H1 (cell line): ENCODE measurements at regions of chr11 and their contacts with region 1.

Region 1: DNA sequence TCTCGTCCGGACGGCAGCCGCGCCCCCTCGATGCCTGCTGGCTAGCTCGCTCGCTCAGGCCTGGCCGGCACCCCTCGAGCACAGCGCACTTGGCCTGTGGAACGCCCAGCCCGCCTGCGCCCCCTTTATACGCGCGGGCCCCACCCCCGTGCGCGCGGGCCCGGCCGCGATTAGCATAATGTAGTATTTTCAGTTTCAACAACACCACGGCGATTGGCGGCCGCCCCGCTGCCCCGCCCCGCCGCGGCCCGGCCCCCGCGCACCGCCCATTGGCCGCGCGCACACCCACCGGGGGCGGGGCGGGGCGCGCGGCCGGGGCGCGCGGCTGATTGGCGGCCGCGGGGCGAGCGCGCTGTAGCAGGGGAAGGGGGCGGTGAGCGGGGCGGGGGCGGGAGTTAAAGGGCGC is at the start of gene CDKN1C:
- DNase-seq: peak; percentile 53 to 87
- H3K4me3 ChIP-seq: peak within 1 kb of the TSS; percentile 52 to 75 (median 56)
- H3K27ac ChIP-seq: no peak within 1 kb of the TSS
- H3K4me1 ChIP-seq: peaks cover 0 to 29% (median 23%) of the 10 kb centered on the region in 4 experiments; a peak in 6 of 7 replicates
- H3K27me3 ChIP-seq: peaks cover 2 to 79% (median 52%) of the 10 kb centered on the region in 4 experiments
- CTCF ChIP-seq: no peak
- EP300 ChIP-seq: no peak
- POLR2A ChIP-seq: peak in 1 of 2 experiments; percentile 90; a peak in 2 of 3 replicates
- RAD21 ChIP-seq: peak in 1 of 2 experiments; percentile 5; a peak in 1 of 4 replicates
- total RNA-seq, gene CDKN1C: 12.8 and 16.2 TPM in 2 replicates

Region 2: GRCh38 chr11:2428322-2428795 is 457.3 kb before region 1 on chr11:
- CTCF ChIA-PET with region 1: interaction called, 40 read pairs
- POLR2A ChIA-PET with region 1: no interaction called
- DNase-seq: peak in 1 of 2 experiments; percentile 93
- H3K4me3 ChIP-seq: no peak overlapping the region
- H3K27ac ChIP-seq: no peak overlapping the region
- H3K4me1 ChIP-seq: no peaks in the 10 kb centered on the region
- H3K27me3 ChIP-seq: peaks cover 0 to 10% (median 0%) of the 10 kb centered on the region in 4 experiments; a peak in 1 of 7 replicates
- CTCF ChIP-seq: peak in 2 of 3 experiments; percentile 94 to 97; a peak in 3 of 4 replicates
- EP300 ChIP-seq: no peak
- POLR2A ChIP-seq: no peak
- RAD21 ChIP-seq: peak; percentile 99

Region 3: DNA sequence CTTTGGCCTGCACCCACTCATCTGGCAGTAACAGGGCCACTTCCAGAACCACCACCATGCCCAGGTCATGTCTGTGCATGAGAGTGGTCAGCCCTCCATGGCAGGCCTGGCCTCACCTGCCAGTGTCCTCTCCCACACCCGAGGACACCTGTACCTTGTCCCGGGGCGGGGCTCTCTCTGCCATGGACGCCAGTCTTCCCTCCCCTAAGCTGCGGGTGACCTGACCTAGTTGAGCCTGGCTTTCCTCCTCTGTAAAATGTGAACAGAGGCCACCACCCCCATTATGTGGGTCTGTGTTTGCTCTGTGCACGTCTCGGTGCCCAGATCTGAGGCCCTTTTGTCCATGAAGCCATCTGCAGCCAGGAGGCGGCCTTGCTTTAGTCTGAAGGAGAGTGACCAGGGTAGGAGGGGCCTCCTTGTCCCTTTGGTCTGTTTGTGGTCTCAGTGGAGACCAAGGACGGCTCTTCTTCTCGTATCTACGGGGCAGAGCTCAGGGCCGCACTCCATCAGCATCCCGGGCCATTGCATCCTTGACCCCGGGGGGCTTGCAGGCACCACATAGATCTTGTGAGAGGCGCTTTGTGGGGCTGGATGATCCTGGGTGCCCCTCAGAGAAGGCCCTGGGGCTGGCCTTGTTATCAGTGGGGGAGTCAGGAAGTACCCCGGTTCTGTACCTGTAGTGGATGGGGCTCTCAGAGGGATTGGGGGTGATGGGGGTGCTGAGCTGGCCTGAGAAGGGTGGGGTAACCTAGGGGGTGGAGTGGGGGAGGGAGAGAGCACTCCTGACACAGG is 319.3 kb before region 1 on chr11:
- CTCF ChIA-PET with region 1: interaction called, 51 read pairs
- POLR2A ChIA-PET with region 1: no interaction called
- DNase-seq: no peak
- H3K4me3 ChIP-seq: no peak overlapping the region
- H3K27ac ChIP-seq: no peak overlapping the region
- H3K4me1 ChIP-seq: peaks cover 0 to 5% (median under 1%) of the 10 kb centered on the region in 4 experiments; a peak in 3 of 7 replicates
- H3K27me3 ChIP-seq: peaks cover 0 to 51% (median 34%) of the 10 kb centered on the region in 4 experiments; a peak in 6 of 7 replicates
- CTCF ChIP-seq: peak in 2 of 3 experiments; percentile 19 to 24; a peak in 2 of 4 replicates
- EP300 ChIP-seq: no peak
- POLR2A ChIP-seq: no peak
- RAD21 ChIP-seq: peak; percentile 37 to 61; a peak in 3 of 4 replicates

Region 4: GRCh38 chr11:2700415-2701211 is 185.1 kb before region 1 on chr11:
- CTCF ChIA-PET with region 1: interaction called, 10 read pairs
- POLR2A ChIA-PET with region 1: interaction called, 3 read pairs
- DNase-seq: no peak
- H3K4me3 ChIP-seq: peak overlapping the region; percentile 1 to 70 (median 20); a peak in 6 of 8 replicates
- H3K27ac ChIP-seq: no peak overlapping the region
- H3K4me1 ChIP-seq: peaks cover 0 to 24% (median 14%) of the 10 kb centered on the region in 4 experiments; a peak in 6 of 7 replicates
- H3K27me3 ChIP-seq: peaks cover 5 to 42% (median 26%) of the 10 kb centered on the region in 4 experiments
- CTCF ChIP-seq: no peak
- EP300 ChIP-seq: no peak
- POLR2A ChIP-seq: no peak
- RAD21 ChIP-seq: 0 out of 4 replicates have a peak, but pooled peaks of 1 of the 2 experiments have one; percentile 2

Region 5: DNA sequence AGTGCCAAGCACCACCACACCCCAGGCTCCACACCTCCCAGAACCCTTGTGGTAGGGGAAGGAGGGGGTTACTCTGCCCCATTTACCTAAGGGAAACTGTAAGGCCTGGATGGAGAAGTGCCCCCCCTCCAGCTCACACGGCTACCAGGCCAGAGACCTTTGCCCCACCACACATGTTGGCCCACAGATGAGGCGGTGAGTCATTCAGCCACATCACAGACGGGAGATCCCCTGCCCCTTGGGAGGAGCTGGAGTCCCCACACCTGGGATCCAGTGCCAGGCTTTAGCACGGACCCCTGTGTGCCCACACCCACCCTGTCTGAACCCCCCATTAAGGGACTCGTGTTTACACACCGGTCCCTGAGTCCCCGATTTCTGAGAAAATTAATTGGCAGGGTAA is 25.0 kb before region 1 on chr11:
- CTCF ChIA-PET with region 1: interaction called, 22 read pairs
- POLR2A ChIA-PET with region 1: interaction called, 8 read pairs
- DNase-seq: no peak
- H3K4me3 ChIP-seq: no peak overlapping the region
- H3K27ac ChIP-seq: no peak overlapping the region
- H3K4me1 ChIP-seq: peaks cover 0 to 24% (median 15%) of the 10 kb centered on the region in 4 experiments; a peak in 6 of 7 replicates
- H3K27me3 ChIP-seq: peaks cover 9 to 59% (median 52%) of the 10 kb centered on the region in 4 experiments
- CTCF ChIP-seq: no peak
- EP300 ChIP-seq: no peak
- POLR2A ChIP-seq: no peak
- RAD21 ChIP-seq: no peak

Region 6: DNA sequence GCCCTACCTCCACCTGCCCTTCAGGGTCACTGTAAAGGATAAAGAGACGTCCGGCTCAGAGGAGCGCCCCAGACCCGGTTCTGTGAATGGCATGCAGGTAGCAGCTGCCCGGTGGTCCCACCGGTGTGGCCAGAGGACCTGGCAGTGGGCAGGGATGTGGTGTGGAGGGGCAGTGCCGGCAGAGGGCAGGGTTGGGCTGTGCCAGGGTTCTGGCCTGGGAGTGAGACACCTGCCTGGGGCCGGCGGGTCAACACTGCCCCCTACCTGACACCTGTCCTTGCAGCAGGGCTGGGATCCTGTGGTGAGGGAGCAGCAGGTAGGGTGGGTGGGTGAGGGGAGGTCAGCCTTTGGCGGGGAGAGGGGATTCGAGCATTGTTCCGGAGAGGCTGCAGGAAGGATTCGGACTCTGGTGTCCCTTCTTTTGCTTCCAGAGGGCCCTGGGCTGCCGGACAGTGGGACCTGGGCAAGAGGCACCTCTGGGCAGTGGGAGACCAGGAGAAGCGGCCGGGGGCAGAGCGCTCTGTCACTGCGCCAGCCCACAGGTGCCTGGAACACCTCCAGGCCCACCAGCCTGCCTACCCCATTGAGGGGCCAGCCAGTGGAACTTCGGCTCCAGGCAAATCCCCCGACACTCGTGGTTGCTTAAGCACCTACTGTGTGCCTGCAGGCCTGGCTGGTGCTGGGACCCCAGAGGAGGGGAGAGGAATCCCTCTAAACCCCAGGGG is 45.2 kb after region 1 on chr11:
- CTCF ChIA-PET with region 1: interaction called, 129 read pairs
- POLR2A ChIA-PET with region 1: interaction called, 8 read pairs
- DNase-seq: peak; percentile 83 to 97
- H3K4me3 ChIP-seq: peak overlapping the region in 3 of 4 experiments; percentile 26 to 56 (median 38); a peak in 6 of 8 replicates
- H3K27ac ChIP-seq: no peak overlapping the region
- H3K4me1 ChIP-seq: peaks cover 0 to 13% (median 5%) of the 10 kb centered on the region in 4 experiments; a peak in 6 of 7 replicates
- H3K27me3 ChIP-seq: peaks cover 25 to 39% (median 37%) of the 10 kb centered on the region in 4 experiments
- CTCF ChIP-seq: peak in 2 of 3 experiments; percentile 96 to 100; a peak in 3 of 4 replicates
- EP300 ChIP-seq: peak in 1 of 2 experiments; percentile 60; a peak in 1 of 3 replicates
- POLR2A ChIP-seq: no peak
- RAD21 ChIP-seq: peak; percentile 93